ENCODE measurements at regions of chr1 and their contacts with region 1.

Region 1: GRCh38 chr1:233790662-233791375 is 113.7 kb upstream of the SLC35F3 start:
- DNase-seq: peak; percentile 76
- H3K4me3 Mint-ChIP-seq: no peak overlapping the region
- H3K27ac Mint-ChIP-seq: no peak overlapping the region
- H3K4me1 Mint-ChIP-seq: no peaks in the 10 kb centered on the region
- H3K27me3 Mint-ChIP-seq: peaks cover 5% of the 10 kb centered on the region

Region 2: GRCh38 chr1:232805269-232806185 is 985.3 kb before region 1 on chr1 and contains the start of gene MAP10:
- intact Hi-C with region 1: no loop called
- DNase-seq: peak; percentile 94
- H3K4me3 Mint-ChIP-seq: peak within 1 kb of the TSS; percentile 91
- H3K27ac Mint-ChIP-seq: peak within 1 kb of the TSS; percentile 86
- H3K4me1 Mint-ChIP-seq: peaks cover 27% of the 10 kb centered on the region
- H3K27me3 Mint-ChIP-seq: peaks cover 10% of the 10 kb centered on the region
- total RNA-seq, gene MAP10: 2.6 and 2.7 TPM in 2 replicates

Region 3: GRCh38 chr1:233304489-233305102 is 486.2 kb before region 1 on chr1:
- intact Hi-C with region 1: loop called (anchors 2 kb)
- DNase-seq: no peak
- H3K4me3 Mint-ChIP-seq: no peak overlapping the region
- H3K27ac Mint-ChIP-seq: no peak overlapping the region
- H3K4me1 Mint-ChIP-seq: no peaks in the 10 kb centered on the region
- H3K27me3 Mint-ChIP-seq: peaks cover 41% of the 10 kb centered on the region

Region 4: DNA sequence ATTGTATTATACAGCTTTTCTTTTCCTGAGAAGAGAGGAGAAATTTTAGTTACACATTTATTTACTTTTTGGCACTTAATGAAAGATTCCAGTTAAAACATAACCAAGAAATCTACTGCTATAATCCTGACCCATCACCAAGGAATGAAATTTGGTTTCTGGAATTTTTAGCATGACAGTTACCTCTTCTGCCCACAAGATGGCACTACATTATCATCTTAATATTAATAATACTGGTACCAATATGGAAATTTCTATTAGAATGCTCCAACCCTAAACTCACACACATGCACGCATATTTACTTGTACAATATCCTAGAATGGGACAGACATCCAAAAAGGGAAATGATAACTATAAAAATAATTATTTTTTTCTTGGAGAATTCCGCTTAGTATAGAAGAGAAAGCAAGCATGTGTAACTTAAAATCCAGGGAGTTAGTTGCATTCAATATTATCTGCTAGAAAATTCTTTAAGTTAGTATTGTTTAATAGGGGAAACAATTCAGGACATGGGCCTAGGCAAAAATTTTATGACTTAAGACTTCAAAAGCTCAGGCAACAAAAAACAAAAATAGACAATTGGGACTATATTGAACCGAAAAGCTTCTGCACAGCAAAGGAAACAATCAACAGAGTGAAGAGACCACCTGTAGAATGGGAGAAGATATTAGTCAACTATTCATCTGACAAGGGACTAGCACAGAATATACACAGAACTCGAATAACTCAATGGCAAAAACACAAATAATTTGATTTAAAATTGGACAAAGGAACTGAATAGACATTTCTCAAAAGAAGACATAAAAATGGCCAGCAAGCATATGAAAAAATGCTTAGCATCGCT is 425.9 kb before region 1 on chr1:
- intact Hi-C with region 1: loop called (anchors 1 kb)
- DNase-seq: no peak
- H3K4me3 Mint-ChIP-seq: no peak overlapping the region
- H3K27ac Mint-ChIP-seq: no peak overlapping the region
- H3K4me1 Mint-ChIP-seq: no peaks in the 10 kb centered on the region
- H3K27me3 Mint-ChIP-seq: peaks cover 9% of the 10 kb centered on the region

Region 5: DNA sequence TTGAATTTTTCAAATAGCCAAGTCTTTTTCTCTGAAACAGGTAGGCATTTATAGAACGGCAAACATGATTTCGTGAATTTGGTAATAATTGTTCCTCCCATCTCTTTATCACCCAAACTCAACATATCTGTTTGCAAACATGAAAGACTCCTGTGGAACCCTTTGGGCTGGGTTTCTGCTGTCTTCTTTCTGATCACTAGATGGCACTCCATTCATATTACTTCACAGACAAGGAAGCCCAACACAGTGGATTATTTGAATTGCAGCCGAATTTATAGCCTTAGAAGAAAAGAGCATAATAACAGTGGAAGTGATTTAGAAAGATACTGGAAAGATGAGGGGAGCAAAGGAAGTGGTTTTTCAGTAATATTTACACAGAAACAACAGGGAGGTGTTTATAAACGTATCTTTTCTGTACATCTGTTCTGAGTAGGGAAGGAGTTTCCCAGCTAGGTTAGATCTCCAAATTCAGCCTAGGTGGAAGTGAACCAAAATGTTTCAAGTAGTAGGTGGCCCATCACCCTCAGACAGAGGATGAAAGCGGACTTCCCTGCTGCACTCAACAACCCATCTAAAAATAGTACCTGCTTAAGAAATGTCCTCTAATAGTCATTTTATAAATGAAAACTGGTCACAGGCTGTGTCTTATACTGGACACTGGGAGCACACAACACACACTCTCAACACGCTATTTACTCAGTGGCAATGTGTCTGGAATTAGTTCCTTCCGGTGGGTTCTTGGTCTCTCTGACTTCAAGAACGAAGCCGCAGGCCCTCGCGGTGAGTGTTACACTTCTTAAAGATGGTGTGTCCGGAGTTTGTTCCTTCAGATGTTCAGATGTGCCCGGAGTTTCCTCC is 395.7 kb before region 1 on chr1:
- intact Hi-C with region 1: loop called (anchors 1 kb)
- DNase-seq: peak; percentile 82
- H3K4me3 Mint-ChIP-seq: no peak overlapping the region
- H3K27ac Mint-ChIP-seq: no peak overlapping the region
- H3K4me1 Mint-ChIP-seq: no peaks in the 10 kb centered on the region
- H3K27me3 Mint-ChIP-seq: peaks cover 37% of the 10 kb centered on the region

Region 6: DNA sequence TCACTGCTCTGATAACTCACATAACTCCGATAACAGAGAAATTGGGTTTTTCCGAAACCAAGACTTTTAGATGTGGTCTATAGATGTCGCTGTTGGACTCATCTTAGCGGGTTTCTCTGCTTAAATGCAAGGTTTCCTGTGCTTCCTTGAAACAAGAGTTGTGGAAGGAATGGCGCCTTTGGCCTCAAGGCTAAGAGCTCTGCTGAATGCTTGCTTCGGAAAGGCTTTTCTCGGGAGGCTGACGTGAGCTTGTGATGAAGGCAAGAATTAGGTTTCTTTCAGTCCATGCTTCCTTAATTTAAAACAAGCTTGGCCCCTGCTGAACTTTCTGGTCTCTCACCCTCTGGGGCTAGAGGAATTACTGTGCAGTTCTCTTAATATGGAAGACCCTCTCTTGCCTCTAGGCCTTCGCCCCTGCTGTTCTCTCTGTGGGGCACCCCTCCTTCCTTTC is 349.8 kb before region 1 on chr1:
- intact Hi-C with region 1: loop called (anchors 1 kb)
- DNase-seq: peak; percentile 69
- H3K4me3 Mint-ChIP-seq: no peak overlapping the region
- H3K27ac Mint-ChIP-seq: no peak overlapping the region
- H3K4me1 Mint-ChIP-seq: no peaks in the 10 kb centered on the region
- H3K27me3 Mint-ChIP-seq: peaks cover 18% of the 10 kb centered on the region

Region 7: DNA sequence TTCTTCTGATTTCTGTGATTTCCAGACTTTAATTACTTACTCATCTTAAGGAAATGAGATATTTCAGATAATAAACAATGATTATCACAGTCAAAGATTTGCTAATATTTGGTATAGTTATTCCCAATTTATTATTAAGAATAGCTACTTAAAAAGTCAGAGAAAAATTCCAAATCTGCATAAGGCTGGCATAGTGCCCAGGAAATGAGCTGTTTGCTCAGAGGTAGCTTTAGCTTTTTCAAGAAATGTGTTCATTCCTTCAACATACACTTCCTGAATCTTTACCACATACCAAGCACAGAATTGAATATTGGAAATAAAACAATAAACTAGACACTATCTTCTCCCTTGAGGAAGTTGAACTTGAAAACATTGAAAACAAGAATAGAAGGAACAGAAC is 221.2 kb before region 1 on chr1:
- intact Hi-C with region 1: no loop called
- DNase-seq: no peak
- H3K4me3 Mint-ChIP-seq: no peak overlapping the region
- H3K27ac Mint-ChIP-seq: no peak overlapping the region
- H3K4me1 Mint-ChIP-seq: no peaks in the 10 kb centered on the region
- H3K27me3 Mint-ChIP-seq: peaks cover 8% of the 10 kb centered on the region

Region 8: GRCh38 chr1:233587958-233588799 is 202.6 kb before region 1 on chr1:
- intact Hi-C with region 1: no loop called
- DNase-seq: no peak
- H3K4me3 Mint-ChIP-seq: no peak overlapping the region
- H3K27ac Mint-ChIP-seq: no peak overlapping the region
- H3K4me1 Mint-ChIP-seq: no peaks in the 10 kb centered on the region
- H3K27me3 Mint-ChIP-seq: peaks cover 22% of the 10 kb centered on the region

Measured in activated CD4-positive, alpha-beta T cell treated with anti-CD3 and anti-CD28 coated beads, Interleukin-2, amount 10 ng/mL, durations not matched to agents 24 days and 14 days (primary cell).